ENCODE measurements at regions of chr11 and their contacts with region 1.

Region 1: DNA sequence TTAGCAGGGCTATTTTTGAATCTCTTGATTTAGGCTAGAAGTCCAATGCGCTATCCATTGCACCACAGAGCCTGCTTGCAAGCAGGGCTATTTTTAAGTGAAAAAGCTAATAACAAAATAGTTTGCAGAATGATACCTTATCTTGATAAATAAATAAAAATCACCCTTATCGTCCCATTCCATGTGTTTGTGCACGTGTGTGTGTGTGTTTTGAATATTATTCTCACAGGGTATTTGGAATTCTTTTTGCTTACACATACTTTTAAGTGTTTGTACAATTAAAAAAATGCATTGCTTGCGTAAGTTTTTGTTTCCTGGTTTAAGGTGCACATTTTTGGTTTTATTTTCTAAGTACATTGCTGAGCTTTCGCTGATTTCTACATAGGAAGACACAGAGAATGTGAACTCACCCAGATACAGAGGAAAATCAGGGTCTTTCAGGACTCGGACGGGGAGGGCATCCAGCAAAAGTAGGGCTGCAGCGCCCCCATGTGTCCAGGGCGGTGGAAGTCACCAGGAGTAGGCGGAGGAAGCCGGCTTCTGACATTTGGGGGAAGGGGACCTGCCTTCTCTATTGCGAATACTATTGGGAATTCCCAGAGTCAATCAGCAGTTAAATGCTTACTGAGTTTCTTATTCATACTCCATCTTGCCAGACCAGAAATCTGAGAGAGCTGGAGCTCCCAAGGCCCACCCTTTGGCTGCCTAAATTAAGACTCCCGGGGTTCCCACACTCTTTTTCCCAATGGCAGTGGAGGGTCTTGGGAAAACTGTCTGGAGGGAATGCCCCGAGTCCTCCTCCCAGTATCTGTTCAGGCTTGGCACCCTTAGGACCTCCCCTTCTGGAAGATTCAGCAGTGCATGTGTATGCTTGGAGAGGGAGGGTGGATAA is 27.2 kb downstream of the SLC1A2 start:
- DNase-seq: peak; percentile 31
- H3K4me3 ChIP-seq: no peak overlapping the region
- CTCF ChIP-seq: peak; percentile 85

Region 2: GRCh38 chr11:34585735-34586487 is 806.3 kb before region 1 on chr11:
- CTCF ChIA-PET with region 1: interaction called, 17 read pairs
- POLR2A ChIA-PET with region 1: no interaction called
- DNase-seq: no peak
- H3K4me3 ChIP-seq: no peak overlapping the region
- CTCF ChIP-seq: peak; percentile 19

Region 3: DNA sequence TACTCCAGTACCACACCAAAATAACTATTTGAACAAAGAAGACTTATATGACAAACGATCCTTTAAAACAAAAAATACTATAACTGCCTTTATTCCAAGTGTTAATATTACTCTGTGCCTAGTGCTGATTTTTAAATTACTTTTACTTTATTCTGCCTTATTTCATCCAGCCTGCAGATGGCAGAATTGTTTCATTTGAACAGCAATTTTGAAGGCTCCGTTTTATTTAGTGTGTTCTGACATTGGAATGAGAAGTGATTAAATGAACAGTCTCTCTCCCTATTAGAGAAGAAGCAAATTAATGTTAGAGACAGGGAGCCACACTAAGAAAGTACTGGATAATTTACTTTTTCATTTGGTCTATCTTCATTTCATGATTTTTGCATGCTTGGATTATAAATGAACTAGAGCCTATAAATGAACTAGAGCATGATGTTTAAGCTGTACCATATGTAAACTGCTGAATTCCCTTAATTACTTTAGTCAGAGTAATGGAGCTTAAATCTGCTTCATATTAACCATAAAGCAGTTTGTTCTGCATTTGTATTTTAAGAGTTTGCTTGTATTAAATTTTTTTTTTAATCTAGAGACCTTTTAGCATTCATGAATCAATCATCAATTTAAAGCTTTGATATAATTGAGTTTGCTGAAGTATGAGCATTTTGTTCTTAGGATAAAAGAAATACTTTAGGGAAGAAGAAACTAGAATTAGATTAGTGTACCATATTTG is 465.9 kb before region 1 on chr11:
- CTCF ChIA-PET with region 1: interaction called, 204 read pairs
- POLR2A ChIA-PET with region 1: interaction called, 3 read pairs
- DNase-seq: no peak
- H3K4me3 ChIP-seq: no peak overlapping the region
- CTCF ChIP-seq: peak; percentile 25

Region 4: GRCh38 chr11:35178873-35179272 is 213.3 kb before region 1 on chr11:
- CTCF ChIA-PET with region 1: interaction called, 12 read pairs
- POLR2A ChIA-PET with region 1: no interaction called
- DNase-seq: no peak
- H3K4me3 ChIP-seq: no peak overlapping the region
- CTCF ChIP-seq: no peak

Region 5: GRCh38 chr11:35380586-35380985 is 11.6 kb before region 1 on chr11:
- CTCF ChIA-PET with region 1: interaction called, 14 read pairs
- POLR2A ChIA-PET with region 1: no interaction called
- DNase-seq: no peak
- H3K4me3 ChIP-seq: no peak overlapping the region
- CTCF ChIP-seq: no peak

Region 6: DNA sequence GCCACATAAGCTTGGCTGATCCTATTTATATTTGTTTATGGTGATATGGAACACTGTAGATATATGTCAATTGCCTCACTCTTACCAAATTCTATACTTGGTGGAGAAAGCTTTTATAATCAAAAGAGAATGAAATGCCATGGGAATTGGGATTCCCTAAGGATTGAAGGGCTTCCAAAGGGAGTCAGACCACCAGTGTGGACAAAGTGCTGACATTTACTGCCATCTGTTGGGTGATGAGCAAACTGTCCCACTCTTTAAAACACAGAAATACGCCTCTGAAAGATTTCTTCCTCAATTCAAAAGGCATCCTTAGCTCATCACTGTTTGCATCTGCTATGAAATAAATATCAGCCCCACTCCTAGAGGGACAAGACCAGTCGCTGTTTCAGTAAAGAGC is 20.1 kb after region 1 on chr11:
- CTCF ChIA-PET with region 1: interaction called, 31 read pairs
- POLR2A ChIA-PET with region 1: no interaction called
- DNase-seq: no peak
- H3K4me3 ChIP-seq: no peak overlapping the region
- CTCF ChIP-seq: peak; percentile 44

Measured in AG04449 (cell line).